Psoas muscle (tissue), 8 donors: ENCODE measurements at regions of chr3 and their contacts with region 1.

Region 1: GRCh38 chr3:57169872-57170623 is 4.9 kb upstream of the IL17RD start:
- DNase-seq: peak; percentile 82 to 86
- ATAC-seq: peak; percentile 76 to 92 (median 83)
- H3K4me3 ChIP-seq: peak overlapping the region; percentile 64
- H3K27ac ChIP-seq: no peak overlapping the region
- H3K4me1 ChIP-seq: no peaks in the 10 kb centered on the region
- H3K27me3 ChIP-seq: no peaks in the 10 kb centered on the region
- CTCF ChIP-seq: peak; percentile 83

Region 2: GRCh38 chr3:57100046-57100695 is 69.9 kb before region 1 on chr3:
- intact Hi-C with region 1: loop called in 1 of 2 experiments (anchors 5 kb)
- DNase-seq: peak in 1 of 2 donors; percentile 32
- ATAC-seq: peak; percentile 75 to 91 (median 80)
- H3K4me3 ChIP-seq: no peak overlapping the region
- H3K27ac ChIP-seq: no peak overlapping the region
- H3K4me1 ChIP-seq: peaks cover 3% of the 10 kb centered on the region
- H3K27me3 ChIP-seq: no peaks in the 10 kb centered on the region
- CTCF ChIP-seq: peak; percentile 94

Region 3: GRCh38 chr3:57130571-57131209 is 39.4 kb before region 1 on chr3:
- intact Hi-C with region 1: no loop called
- DNase-seq: peak in 1 of 2 donors; percentile 64
- ATAC-seq: peak in 1 of 4 donors; percentile 37
- H3K4me3 ChIP-seq: no peak overlapping the region
- H3K27ac ChIP-seq: no peak overlapping the region
- H3K4me1 ChIP-seq: no peaks in the 10 kb centered on the region
- H3K27me3 ChIP-seq: no peaks in the 10 kb centered on the region
- CTCF ChIP-seq: no peak

Region 4: DNA sequence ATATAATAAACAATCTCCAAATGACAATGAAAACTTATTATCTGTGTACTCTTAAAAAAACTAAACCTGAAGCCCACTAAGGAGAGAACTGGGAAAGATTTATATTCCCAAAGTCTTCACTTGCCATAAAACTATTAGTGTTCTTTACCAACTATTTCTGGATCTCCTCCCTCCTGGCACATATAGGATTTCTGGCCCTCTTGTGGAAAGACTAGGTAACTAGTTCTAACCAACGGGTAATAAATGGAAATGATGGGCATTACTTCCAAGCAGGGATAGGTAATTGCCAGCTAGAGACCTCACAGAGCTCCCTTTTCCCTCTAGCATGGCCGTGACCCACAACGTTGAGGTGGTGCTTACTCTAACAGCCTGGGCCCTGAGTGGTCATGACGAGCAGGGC is 264.0 kb after region 1 on chr3:
- intact Hi-C with region 1: loop called (anchors 5 kb)
- DNase-seq: no peak
- ATAC-seq: peak in 2 of 4 donors; percentile 45 to 71
- H3K4me3 ChIP-seq: no peak overlapping the region
- H3K27ac ChIP-seq: no peak overlapping the region
- H3K4me1 ChIP-seq: no peaks in the 10 kb centered on the region
- H3K27me3 ChIP-seq: no peaks in the 10 kb centered on the region
- CTCF ChIP-seq: peak; percentile 53